Right ventricle myocardium inferior (tissue), 1 donor: ENCODE measurements at regions of chr1 and their contacts with region 1.

Region 1: GRCh38 chr1:232319072-232319471 is 310.9 kb downstream of the SIPA1L2 start:
- DNase-seq: peak; percentile 90
- ATAC-seq: peak; percentile 93

Region 2: DNA sequence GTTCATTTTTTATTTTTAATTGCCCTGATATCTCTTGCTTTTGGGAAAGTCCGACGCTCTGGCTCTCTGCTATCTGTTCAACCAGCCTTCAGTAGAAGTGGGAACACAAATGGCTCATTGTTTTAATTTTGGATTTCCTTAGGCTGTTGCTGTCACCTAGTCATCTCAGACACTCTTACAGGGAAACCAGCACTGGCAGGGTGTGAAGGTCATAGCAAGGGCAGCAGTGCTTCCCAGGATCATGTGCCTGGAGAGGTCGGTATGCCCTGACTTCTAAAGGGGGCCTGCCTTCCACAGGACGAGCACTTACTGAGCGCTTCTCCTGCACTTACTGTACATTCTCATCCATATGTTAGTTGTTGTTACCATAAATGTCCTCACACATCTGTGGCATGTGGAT is 468.3 kb before region 1 on chr1:
- intact Hi-C with region 1: loop called (anchors 2 kb)
- DNase-seq: no peak
- ATAC-seq: peak; percentile 83

Region 3: DNA sequence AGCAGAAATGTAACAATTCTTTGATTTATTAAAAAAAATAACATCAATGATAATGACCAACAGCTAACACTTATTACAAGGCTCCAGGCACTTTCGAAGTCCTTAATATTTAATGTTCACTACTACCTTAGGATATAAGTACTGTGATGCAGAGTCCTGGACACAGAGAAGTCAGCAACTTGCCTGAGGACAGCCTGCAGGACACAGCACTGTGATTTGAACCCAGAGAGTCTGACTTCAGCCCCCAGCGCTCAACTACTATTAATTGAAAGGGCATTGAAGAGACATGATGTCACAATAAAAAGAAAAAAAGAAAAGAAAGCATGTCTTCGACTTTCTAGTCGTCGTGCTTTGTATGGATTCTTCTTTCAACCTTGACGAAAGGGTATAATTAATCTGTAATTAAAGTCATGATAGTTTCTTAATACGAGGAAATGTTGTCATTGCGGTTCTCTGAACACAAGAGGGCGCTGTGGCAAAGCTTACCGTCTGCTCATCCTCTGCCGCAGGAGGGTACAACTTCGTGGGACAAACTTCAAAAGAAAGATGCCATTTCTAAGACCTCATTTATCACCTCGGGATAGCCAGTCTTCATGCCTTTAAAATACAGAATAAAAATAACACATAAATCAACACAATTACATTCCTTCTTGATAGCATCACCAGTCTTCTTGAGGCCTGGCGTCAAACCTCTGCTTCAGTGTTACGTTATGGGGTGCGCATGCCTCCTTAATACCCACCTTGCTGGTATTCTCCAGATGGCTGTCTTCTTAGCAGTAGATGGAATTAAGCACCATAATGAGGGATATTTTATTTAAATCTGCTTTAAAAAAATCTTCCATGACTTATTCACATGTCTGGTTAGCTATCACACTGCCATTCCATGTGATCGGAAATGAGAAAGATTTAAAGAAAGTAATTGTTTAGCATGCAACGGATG is 452.4 kb before region 1 on chr1:
- intact Hi-C with region 1: loop called (anchors 2 kb)
- DNase-seq: no peak
- ATAC-seq: no peak

Region 4: DNA sequence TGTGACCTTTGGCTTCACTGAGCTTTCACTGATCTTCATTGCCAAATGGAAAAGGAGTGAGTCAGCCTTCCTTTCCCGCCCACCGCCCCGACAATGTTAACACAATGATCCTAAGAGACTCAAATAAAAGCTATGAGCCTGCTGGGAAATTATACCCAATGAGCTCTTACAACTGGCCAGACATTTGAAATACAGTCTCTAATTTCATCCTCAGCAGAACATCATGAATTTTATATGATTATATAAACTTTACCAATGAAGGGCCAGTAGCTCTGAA is 58.4 kb after region 1 on chr1:
- intact Hi-C with region 1: loop called (anchors 5 kb)
- DNase-seq: no peak
- ATAC-seq: no peak

Region 5: GRCh38 chr1:232398823-232399222 is 79.8 kb after region 1 on chr1:
- intact Hi-C with region 1: no loop called
- DNase-seq: no peak
- ATAC-seq: no peak

Region 6: GRCh38 chr1:232553050-232553754 is 234.1 kb after region 1 on chr1:
- intact Hi-C with region 1: loop called (anchors 1 kb)
- DNase-seq: peak; percentile 83
- ATAC-seq: peak; percentile 82